HAP-1 (cell line): ENCODE measurements at regions of chrX and their contacts with region 1.

Region 1: DNA sequence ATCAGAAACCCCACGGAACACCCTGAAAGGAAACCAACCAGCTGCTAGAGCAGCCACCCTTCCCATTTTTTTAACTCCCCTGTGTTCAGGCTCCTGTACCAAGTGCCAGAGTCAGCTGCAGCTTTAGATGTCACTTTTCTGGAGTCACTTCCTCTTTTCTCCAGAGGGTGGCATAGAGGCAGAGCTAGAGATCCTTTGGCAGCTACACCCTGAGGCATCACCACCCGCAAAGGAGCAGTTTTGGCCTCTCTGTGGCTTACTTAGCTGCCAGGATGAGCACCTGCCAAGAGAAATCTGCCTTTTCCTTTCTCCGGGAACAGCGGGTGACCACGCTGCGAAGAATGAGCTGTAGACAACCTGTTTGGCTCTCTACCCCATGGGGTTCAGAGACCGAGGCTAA is 58.0 kb upstream of the CHRDL1 start:
- DNase-seq: peak; percentile 36 to 61
- H3K4me3 ChIP-seq: no peak overlapping the region
- H3K4me1 ChIP-seq: no peaks in the 10 kb centered on the region
- H3K27me3 ChIP-seq: no peaks in the 10 kb centered on the region

Region 2: DNA sequence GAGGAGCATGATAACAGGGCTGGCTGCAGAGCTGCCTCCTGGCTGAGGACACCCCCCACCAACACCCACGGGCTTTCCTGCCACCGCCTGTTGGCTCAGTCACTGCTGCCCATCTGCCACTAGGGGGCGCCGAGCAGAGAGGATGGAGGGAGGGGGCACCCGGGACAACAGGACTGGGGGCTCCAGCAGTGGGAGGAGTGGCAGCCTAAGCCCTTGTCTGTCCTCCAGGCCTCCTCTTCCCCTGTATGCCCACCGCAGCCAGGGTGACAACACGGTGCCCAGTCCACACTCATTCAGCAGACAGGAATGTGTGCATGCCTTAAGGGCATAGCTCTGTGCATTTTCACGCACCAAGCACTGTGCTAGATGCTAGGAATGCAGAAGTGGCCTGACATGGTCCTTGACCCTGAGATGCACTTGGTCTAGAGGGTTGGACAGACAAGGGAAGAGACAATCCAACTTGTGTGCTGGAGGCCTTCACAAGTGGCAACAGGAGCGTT is 685.6 kb before region 1 on chrX:
- in situ Hi-C with region 1: loop called (anchors 10 kb)
- DNase-seq: peak in 1 of 2 experiments; percentile 72
- H3K4me3 ChIP-seq: no peak overlapping the region
- H3K4me1 ChIP-seq: no peaks in the 10 kb centered on the region
- H3K27me3 ChIP-seq: no peaks in the 10 kb centered on the region

Region 3: DNA sequence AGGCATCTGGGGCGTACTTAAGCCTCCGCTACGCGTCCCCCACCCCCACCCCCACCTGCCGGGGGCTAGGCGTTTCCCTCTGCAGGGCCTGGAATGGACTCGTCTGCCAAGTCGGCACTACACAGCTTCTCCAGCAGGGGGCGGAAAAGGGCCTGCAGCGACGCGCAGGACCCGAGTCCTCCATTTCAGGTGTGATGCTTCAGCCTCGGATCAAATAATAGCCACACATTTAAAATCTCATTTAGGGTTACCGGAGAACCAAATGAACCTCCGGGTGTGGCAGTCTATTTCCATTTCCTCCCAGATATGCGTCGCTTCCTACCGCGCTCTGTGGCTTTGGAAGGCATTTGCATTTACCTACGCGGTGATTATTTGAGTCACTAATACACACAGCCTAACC is 245.3 kb after region 1 on chrX:
- in situ Hi-C with region 1: loop called (anchors 10 kb)
- DNase-seq: peak; percentile 60 to 90
- H3K4me3 ChIP-seq: no peak overlapping the region
- H3K4me1 ChIP-seq: peaks cover 14% of the 10 kb centered on the region
- H3K27me3 ChIP-seq: no peaks in the 10 kb centered on the region

Region 4: GRCh38 chrX:111244235-111244750 is 390.7 kb after region 1 on chrX:
- in situ Hi-C with region 1: loop called (anchors 5 kb)
- DNase-seq: peak in 1 of 2 experiments; percentile 97
- H3K4me3 ChIP-seq: no peak overlapping the region
- H3K4me1 ChIP-seq: peaks cover 13% of the 10 kb centered on the region
- H3K27me3 ChIP-seq: no peaks in the 10 kb centered on the region